ENCODE measurements at regions of chr9 and their contacts with region 1.

Region 1: DNA sequence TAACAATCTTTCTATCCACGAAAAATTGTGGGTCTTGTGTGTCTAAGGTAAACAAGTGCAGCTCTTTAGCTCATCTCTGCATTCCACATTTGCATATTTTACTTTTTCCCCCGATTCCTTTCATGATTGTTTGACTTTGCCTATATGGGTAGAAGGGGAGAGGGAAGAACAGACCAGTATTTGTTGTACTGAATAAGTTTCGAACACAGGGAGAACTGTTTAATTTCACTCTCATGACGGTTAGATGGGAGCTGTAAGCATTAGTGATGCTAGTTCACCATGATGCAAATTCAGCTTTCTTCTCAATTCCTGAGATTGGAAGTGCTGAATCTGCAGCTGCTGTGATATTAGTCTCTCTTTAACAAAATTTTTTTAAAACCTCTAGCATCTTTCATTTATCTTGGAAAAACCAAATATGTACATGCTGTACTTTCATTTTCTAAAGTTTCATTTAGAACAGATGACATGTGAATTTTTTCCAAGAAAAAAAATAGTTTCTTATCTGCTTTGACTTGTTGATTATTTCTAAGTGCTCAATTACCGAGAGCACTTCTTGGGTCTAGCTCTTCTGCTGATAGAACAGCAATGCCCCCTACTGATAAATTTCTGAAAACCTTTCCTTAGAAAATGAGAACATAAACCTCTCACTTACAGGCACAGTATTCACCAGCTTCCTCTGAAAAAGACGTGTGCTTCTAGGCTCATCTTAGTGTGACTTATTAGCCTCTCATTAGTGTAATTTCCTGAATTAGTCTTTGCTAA is 149.5 kb downstream of the BAAT start:
- DNase-seq: no peak
- ATAC-seq: peak; percentile 89
- H3K4me3 Mint-ChIP-seq: no peak overlapping the region
- H3K27ac Mint-ChIP-seq: peak overlapping the region; percentile 35
- H3K4me1 Mint-ChIP-seq: peaks cover 47% of the 10 kb centered on the region
- H3K27me3 Mint-ChIP-seq: no peaks in the 10 kb centered on the region
- CTCF ChIP-seq: peak; percentile 32; the same call in 1 of the 2 replicates

Region 2: DNA sequence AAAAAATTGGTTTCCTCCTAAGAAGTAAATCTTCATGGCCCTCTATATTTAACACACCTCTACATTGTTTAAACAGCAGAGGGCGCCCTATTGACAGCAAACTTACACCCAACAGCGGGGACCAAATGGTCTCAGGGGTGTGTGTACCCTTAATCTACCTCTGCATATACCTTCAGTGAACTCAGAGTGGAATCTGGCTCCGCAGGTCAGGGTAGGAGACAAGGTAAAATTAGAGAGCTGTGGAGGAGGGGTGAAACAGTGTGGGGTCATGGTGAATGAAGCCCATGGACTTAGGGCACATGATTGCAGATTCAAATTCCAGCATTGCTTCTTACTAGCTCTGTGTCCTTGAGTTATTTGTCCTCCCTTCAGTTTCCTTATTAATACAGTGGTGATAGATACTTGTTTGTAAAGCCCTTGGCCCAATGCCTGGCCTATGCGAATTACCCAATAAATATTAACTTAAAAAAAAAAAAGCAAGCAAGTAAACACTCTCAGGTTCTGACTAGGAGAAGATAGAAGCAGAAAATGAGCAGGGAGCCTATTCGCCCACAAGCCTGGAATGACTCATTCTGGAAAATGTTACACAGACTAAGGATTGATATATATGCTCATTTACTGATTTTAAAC is 534.5 kb before region 1 on chr9:
- CTCF ChIA-PET with region 1: interaction called, 28 read pairs
- POLR2A ChIA-PET with region 1: no interaction called
- DNase-seq: peak; percentile 44
- ATAC-seq: peak; percentile 96
- H3K4me3 Mint-ChIP-seq: no peak overlapping the region
- H3K27ac Mint-ChIP-seq: no peak overlapping the region
- H3K4me1 Mint-ChIP-seq: peaks cover 11% of the 10 kb centered on the region
- H3K27me3 Mint-ChIP-seq: no peaks in the 10 kb centered on the region
- CTCF ChIP-seq: peak; percentile 48

Region 3: DNA sequence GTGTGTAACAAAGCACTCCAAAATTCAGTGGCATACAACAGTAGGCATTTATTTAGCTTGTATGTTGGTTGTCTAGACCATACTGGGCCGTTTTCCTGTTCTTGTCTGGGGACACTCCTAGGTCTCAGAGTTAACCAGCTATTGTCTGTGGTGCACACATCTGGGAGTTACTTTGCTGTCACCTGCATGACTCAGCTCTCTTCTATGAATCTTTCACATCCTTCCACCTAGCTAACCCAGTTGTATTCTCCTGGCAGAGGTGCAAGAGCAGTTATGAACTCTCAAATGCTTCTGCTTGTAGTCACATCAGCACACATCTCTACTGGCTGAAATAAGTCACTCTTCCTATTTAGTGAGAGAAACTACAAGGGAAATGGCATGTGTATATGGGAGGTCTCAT is 11.4 kb after region 1 on chr9:
- CTCF ChIA-PET with region 1: interaction called, 15 read pairs
- POLR2A ChIA-PET with region 1: no interaction called
- DNase-seq: no peak
- ATAC-seq: no peak
- H3K4me3 Mint-ChIP-seq: no peak overlapping the region
- H3K27ac Mint-ChIP-seq: no peak overlapping the region
- H3K4me1 Mint-ChIP-seq: no peaks in the 10 kb centered on the region
- H3K27me3 Mint-ChIP-seq: no peaks in the 10 kb centered on the region
- CTCF ChIP-seq: no peak

Measured in WTC11 (cell line).